ENCODE measurements at regions of chr11 and their contacts with region 1.

Region 1: DNA sequence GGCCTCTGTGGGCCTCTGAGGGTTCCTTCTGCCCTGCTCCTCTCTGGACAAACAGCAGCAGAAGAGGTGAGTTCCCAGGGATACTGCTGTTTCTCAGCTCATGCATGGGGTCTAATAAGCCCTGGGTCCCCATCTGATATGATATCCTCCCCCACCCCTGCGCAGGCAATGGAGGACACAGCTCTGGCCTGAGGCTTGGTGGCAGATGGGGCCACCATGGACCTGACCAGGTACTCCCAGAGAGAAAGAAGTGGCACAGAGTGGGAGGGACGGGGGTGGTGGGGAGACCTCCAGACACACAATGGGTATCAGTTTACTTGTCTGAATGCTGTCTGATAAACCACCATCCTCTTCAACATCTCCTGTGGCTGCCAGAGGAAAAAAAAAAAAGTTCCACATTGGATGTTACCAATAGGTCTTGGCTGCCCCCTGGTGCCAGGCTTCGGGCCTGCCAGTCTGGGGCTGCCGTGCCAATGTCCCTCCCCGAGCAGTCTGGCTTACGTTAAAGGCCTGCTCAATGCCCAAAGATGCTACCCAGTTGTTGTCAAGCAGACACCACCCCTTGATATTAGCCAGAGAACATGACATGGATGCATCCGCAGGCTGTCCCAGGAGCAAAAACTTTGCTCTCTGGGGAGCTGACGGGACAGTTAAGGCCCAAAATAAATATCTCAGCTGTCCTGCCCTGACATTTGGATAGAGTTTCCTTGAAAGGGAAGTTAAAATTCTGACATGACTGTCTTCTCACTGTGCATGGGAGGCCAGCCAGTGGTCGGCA is 27.9 kb upstream of the ABCC8 start:
- DNase-seq: peak; percentile 68
- H3K4me3 ChIP-seq: no peak overlapping the region
- H3K27ac ChIP-seq: no peak overlapping the region
- H3K4me1 ChIP-seq: no peaks in the 10 kb centered on the region
- H3K27me3 ChIP-seq: no peaks in the 10 kb centered on the region
- CTCF ChIP-seq: peak; percentile 81

Region 2: DNA sequence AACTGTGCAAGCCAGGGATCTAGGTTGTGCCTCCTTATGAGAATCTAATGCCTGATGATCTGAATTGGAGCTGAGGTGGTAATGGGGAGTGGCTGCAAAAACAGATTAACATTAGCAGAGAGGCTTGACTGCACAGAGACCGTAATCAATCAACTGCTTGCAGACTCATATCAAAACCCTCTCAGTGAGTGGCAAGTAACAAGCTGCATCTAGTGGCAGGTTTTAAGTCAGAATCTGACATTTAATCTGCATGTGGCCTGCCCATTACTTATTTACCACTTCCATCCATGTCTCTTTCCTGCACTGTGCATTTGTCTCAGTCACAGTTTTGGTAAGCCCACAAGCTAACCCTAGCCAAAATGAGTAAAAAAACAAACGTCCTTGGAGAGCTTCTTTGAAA is 754.9 kb before region 1 on chr11:
- CTCF ChIA-PET with region 1: no interaction called
- POLR2A ChIA-PET with region 1: no interaction called
- intact Hi-C with region 1: no loop called
- DNase-seq: no peak
- H3K4me3 ChIP-seq: no peak overlapping the region
- H3K27ac ChIP-seq: no peak overlapping the region
- H3K4me1 ChIP-seq: no peaks in the 10 kb centered on the region
- H3K27me3 ChIP-seq: no peaks in the 10 kb centered on the region
- CTCF ChIP-seq: no peak

Region 3: DNA sequence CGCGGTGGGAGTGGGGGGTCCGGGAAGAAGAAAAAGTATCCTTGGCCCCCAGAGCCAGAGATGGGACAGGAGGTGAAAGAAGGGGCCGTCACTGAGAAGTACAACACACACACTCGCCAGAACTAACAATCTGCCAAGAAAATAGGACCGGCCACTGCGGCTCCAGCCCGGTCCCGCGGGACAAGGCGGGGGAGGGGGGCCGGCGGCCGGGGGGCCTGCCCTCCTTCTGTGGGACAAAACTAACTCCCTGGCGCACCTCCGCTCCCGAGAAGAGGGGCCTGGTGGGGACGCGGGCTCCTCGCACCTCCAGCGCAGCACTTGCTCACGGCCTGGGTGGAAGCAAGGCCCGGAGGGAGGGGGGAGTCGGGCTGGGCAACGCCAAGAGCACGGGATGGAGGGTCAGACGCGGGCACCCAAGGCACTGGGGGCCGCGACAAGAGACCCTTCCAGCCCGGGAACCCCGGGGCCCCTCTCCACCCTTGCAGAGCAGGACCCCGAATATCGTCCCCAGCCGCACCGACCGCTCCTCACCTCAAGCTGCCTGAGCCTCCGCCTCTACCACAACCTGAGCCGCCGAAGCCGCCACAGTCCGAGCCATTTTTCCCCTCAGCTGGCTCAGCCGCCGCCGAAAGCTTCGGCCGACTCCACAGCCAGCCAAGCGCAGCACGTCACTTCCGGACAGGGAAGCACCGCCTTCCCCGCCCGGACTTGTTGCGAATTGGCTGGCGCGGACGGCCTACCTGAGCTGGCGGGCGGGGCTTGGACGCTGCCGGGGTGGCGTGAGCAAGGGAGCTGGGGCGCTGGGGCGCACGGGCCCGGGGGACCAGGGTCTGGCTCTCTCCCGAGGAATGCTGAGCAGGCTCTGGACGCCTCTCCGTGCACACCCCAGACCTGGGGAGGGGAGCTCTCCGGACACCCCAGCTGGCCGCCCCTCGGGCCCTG is 296.9 kb before region 1 on chr11 and contains the start of gene PIK3C2A:
- CTCF ChIA-PET with region 1: no interaction called
- POLR2A ChIA-PET with region 1: no interaction called
- intact Hi-C with region 1: no loop called
- DNase-seq: peak; percentile 96
- H3K4me3 ChIP-seq: peak within 1 kb of the TSS; percentile 95
- H3K27ac ChIP-seq: peak within 1 kb of the TSS; percentile 89
- H3K4me1 ChIP-seq: peaks cover 6% of the 10 kb centered on the region
- H3K27me3 ChIP-seq: no peaks in the 10 kb centered on the region
- CTCF ChIP-seq: no peak
- total RNA-seq, gene PIK3C2A: 43.8 and 44.2 TPM in 2 replicates

Region 4: DNA sequence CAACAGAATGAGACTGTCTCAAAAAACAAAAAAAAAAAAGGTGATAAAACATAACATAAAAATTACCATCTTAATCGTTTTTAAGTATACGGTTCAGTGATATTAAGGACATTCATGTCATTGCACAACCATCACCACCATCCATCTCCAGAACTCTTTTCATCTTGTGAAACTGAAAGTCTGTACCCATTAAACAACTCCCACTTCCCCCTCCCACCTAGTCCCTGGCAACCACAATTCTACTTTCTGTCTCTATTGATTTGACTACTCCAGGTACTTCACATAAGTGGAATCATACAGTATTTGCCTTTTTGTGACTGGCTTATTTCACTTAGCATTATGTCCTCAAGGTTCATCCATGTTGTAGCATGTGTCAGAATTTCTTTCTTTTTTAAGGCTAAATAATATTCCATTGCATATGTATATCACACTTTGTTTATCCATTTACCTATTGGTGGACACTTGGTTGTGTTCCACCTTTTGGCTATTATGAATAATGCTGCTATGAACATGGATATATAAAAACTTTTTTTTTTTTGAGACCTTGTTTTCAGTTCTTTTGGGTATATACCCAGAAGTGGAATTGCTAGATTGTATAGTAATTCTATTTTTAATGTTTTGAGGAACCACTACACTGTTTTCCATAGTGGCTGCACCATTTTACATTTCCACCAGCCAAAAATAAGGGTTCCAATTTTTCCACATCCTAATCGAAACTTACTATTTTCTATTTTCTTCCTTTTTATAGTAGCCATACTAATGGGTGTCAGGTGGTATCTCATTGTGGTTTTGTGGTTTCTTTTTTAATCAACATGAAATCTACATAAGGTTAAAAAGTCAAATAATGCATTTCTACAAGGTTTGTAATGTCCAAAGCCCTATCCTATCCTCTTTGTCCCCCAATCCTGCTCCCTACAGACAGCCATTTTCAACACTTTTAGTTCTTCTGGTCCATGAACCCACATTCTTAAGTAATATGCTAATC is 273.4 kb before region 1 on chr11:
- CTCF ChIA-PET with region 1: no interaction called
- POLR2A ChIA-PET with region 1: no interaction called
- intact Hi-C with region 1: loop called (anchors 5 kb)
- DNase-seq: no peak
- H3K4me3 ChIP-seq: no peak overlapping the region
- H3K27ac ChIP-seq: no peak overlapping the region
- H3K4me1 ChIP-seq: no peaks in the 10 kb centered on the region
- H3K27me3 ChIP-seq: no peaks in the 10 kb centered on the region
- CTCF ChIP-seq: no peak